ENCODE measurements at regions of chr20 and their contacts with region 1.

Region 1: DNA sequence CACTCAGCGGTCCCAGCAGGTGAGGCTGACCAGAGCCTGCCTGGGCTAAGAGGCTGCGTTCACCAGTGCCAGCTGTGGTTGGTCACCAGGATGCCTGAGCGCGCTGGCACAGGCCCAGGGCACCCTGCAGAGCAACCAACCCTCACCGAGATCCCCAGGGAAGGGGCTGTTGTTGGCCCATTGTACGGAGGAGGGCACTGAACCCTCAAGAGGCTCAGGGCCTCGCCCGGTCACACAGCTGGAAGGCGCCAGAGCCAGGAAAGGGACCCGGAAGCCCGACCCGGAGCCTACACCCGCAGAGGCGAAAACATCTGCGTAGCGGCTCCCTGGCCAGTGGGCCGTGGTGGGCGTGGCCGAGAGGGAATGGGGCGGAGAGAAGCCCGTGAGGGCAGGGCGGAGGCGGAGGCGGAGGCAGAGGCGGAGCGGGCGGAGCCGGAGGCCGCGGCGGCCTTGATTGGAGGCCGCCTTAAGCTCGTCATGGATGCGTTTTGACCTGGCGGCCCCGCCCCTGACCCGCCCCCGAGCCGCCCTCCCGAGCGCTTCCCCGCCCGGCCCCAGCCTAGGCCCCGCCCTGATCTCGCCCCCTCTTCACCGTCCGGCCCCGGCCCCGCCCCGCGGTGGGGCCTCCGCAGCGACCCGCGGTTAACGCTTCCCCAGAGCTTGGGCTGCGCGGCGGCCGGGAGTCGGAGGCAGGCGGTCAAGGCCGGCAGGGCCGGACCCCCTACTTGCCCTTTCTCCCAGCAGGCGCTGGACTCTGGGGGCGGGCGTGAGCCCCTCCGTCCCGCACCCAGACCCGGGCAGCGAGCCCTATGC is 2.2 kb upstream of the MRGBP start:
- DNase-seq: peak; percentile 80
- H3K4me3 ChIP-seq: peak overlapping the region; percentile 69
- H3K27ac ChIP-seq: peak overlapping the region; percentile 70
- H3K27me3 ChIP-seq: no peaks in the 10 kb centered on the region
- CTCF ChIP-seq: no peak

Region 2: DNA sequence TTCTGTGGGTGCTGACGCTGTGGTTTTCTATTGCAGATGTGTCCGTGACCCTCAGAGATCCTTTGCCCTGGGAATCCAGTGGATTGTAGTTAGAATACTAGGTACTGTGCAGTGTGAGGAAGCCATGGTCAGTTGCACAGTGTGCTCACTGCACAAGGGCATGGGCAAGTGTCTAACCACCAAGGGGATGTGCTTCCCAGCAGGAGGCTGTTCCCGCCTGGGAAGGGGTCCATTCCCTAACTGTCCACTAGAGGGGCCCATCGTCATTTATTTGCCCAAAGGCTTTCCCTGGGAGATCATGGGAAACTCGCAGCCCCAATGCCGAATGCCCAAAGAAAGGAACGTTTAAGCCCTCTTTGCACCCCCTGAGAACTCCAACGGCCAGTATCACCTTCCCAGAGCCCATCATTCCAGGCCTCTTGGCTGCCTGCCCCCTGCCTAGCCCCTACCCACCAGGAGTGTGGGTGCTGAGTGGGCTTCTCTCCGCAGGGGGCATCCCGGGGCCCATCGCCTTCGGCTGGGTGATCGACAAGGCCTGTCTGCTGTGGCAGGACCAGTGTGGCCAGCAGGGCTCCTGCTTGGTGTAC is 125.6 kb before region 1 on chr20:
- CTCF ChIA-PET with region 1: interaction called, 81 read pairs
- POLR2A ChIA-PET with region 1: no interaction called
- DNase-seq: peak; percentile 54
- H3K4me3 ChIP-seq: no peak overlapping the region
- H3K27ac ChIP-seq: no peak overlapping the region
- H3K27me3 ChIP-seq: peaks cover 3% of the 10 kb centered on the region
- CTCF ChIP-seq: peak; percentile 97

Region 3: DNA sequence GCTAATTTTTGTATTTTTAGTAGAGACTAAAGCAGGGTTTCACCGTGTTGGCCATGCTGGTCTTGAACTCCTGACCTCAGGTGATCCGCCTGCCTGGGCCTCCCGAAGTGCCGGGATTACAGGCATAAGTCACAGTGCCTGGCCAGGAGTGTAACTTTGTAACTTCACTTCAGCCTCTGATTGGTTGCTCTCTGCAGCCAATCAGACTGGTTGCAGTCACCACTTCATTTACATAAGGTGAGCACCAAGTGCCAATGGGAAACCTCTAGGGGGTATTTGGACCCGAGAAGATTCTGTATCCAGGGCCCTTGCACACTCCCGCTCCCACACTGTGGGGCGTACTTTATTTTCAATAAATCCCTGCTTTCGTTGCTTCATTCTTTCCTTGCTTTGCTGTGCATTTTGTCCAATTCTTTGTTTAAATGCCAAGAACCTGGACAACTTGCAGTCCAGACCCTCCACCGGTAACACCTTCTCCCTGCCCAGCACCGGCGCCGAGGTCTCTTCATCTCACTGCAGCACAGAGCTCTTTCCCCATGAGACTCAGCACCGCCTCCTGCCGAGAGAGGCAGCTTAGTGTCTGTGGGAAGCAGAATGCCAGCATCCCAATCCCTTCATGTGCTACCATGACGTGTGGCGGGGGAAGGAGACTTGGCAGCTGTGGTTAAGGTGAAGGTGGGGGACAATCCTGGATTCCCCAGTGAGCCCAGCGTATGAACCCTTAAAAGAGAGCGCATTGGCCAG is 11.8 kb before region 1 on chr20:
- CTCF ChIA-PET with region 1: interaction called, 10 read pairs
- POLR2A ChIA-PET with region 1: interaction called, 3 read pairs
- DNase-seq: no peak
- H3K4me3 ChIP-seq: no peak overlapping the region
- H3K27ac ChIP-seq: no peak overlapping the region
- H3K27me3 ChIP-seq: peaks cover 15% of the 10 kb centered on the region
- CTCF ChIP-seq: 0 out of 2 replicates have a peak, but pooled peaks have one; percentile 15